ENCODE measurements at regions of chr15 and their contacts with region 1.

Region 1: DNA sequence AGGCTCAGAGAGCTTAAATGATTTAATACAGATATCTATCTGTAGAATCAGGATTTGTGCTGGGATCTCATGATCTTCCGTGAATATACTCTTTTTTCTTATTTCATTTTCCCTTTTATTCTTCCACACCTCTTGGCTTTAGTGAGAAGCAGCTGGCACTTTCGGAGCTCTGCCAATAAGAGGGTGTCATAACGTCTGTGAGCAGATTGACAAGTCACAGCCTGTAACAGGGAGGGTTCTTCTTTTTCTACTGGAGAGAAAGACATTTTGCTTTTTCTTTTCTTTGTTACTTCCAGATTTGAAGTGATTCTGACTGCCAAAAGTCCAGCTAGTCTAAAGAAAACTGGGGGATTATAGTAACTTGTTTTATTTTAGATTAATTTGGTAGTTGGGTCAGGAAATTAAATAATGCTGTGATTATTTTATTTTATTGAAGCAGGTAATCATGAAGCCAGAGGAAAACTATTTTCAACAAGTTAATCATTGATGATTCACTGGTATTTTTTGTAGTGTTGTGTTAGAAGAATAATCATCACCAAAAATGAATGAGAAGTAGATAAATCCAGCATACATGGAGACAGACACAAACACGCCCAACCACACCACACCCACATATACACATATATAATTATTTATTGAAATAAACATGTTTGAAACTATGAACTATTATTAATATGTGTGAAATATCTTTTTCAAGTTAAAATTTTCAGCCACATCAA is 69.8 kb downstream of the TNFAIP8L3 start:
- DNase-seq: no peak
- ATAC-seq: no peak
- H3K4me3 ChIP-seq: no peak overlapping the region
- H3K4me3 Mint-ChIP-seq: no peak overlapping the region
- H3K27ac ChIP-seq: no peak overlapping the region
- H3K27ac Mint-ChIP-seq: no peak overlapping the region
- H3K4me1 ChIP-seq: no peaks in the 10 kb centered on the region
- H3K4me1 Mint-ChIP-seq: no peaks in the 10 kb centered on the region
- H3K27me3 ChIP-seq: no peaks in the 10 kb centered on the region
- H3K27me3 Mint-ChIP-seq: no peaks in the 10 kb centered on the region
- CTCF ChIP-seq: no peak

Region 2: DNA sequence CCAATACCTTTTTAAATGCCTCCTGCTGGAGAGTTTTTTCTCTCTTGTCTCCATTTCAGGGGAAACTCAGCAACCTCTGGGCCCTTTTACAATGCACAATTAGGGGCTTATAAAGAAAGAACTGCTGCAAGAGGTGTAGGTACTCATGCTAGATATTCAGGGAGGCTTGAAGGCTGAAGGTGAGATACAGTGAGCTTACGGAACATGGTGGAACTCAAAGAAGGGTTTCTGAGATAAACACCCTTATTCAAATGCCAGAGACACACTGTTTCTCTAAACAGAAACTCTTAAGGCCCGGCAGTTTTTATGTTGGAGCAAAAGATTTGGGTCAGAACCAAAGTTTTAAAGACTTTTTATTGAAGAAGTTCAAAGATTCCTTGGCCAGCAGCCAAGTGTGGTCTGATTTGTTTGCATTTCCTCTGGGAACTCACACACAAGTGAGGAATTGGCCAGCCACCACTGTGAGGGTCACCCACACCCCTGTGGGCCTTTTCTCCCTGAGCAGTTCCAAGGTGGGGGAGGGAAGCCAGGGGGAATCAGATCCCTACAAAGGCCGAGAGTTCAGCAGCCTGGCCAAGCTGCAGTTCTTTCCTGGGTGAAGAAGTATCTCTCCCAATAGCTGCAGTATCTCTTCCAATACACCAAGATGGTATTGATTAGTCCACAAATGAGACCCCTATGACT is 22.0 kb after region 1 on chr15:
- CTCF ChIA-PET with region 1: no interaction called
- POLR2A ChIA-PET with region 1: no interaction called
- intact Hi-C with region 1: loop called in 1 of 2 experiments (anchors 2 kb)
- DNase-seq: no peak
- ATAC-seq: no peak
- H3K4me3 ChIP-seq: no peak overlapping the region
- H3K4me3 Mint-ChIP-seq: no peak overlapping the region
- H3K27ac ChIP-seq: no peak overlapping the region
- H3K27ac Mint-ChIP-seq: no peak overlapping the region
- H3K4me1 ChIP-seq: no peaks in the 10 kb centered on the region
- H3K4me1 Mint-ChIP-seq: no peaks in the 10 kb centered on the region
- H3K27me3 ChIP-seq: peaks cover 2 to 5% of the 10 kb centered on the region in 2 experiments
- H3K27me3 Mint-ChIP-seq: peaks cover 7% of the 10 kb centered on the region
- CTCF ChIP-seq: no peak

Measured in CD4-positive, alpha-beta T cell (primary cell).